ENCODE measurements at regions of chr6 and their contacts with region 1.

Region 1: DNA sequence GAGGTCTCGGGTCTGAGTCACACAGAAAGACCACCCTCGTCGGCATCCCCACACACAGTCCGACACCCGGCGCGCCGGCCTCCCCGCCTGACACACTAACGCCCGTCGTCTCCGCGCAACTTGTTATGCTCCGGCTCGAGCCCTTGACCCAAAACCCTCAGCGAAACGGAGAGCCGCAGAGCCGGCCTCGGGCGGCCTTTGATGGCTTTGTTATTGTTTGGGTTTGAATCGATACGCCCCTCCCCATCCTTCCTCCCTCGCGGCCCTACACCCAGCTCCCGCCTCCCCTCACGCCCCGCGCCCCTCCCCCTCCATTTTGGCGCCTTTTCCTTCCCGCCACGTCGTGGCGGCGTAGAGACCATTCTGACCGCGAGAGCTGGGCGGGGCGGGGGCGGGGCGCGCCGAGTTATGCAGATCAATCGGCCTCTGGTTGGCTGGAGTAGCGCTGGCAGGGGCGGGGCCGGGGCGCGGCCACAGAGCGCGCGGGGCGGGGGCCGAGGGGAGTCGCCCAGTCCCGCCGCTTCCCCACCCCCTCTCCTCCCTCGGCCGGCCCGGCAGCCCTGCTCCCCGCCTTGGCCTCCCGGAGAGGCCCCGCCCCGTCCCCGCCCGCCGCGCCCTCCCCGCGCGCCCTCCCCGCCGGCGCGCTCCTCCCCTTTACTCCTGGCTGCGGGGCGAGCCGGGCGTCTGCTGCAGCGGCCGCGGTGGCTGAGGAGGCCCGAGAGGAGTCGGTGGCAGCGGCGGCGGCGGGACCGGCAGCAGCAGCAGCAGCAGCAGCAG is at the start of gene PIM1:
- DNase-seq: peak; percentile 100
- H3K4me3 Mint-ChIP-seq: peak within 1 kb of the TSS; percentile 93
- H3K27ac Mint-ChIP-seq: peak within 1 kb of the TSS; percentile 96
- H3K4me1 Mint-ChIP-seq: peaks cover 34% of the 10 kb centered on the region
- H3K27me3 Mint-ChIP-seq: no peaks in the 10 kb centered on the region
- total RNA-seq, gene PIM1: 226 to 227 TPM

Region 2: GRCh38 chr6:36874443-36875249 is 295.0 kb before region 1 on chr6 and contains the start of gene PPIL1:
- CTCF ChIA-PET with region 1: no interaction called
- intact Hi-C with region 1: loop called (anchors 5 kb)
- DNase-seq: peak; percentile 88
- H3K4me3 Mint-ChIP-seq: peak within 1 kb of the TSS; percentile 94
- H3K27ac Mint-ChIP-seq: peak within 1 kb of the TSS; percentile 98
- H3K4me1 Mint-ChIP-seq: peaks cover 39% of the 10 kb centered on the region
- H3K27me3 Mint-ChIP-seq: peaks cover 8% of the 10 kb centered on the region
- total RNA-seq, gene PPIL1: 42.8 to 44.0 TPM

Region 3: GRCh38 chr6:37038292-37039198 is 131.1 kb before region 1 on chr6:
- CTCF ChIA-PET with region 1: interaction called, 8 read pairs
- intact Hi-C with region 1: loop called (anchors 1 kb)
- DNase-seq: no peak
- H3K4me3 Mint-ChIP-seq: no peak overlapping the region
- H3K27ac Mint-ChIP-seq: no peak overlapping the region
- H3K4me1 Mint-ChIP-seq: peaks cover 36% of the 10 kb centered on the region
- H3K27me3 Mint-ChIP-seq: no peaks in the 10 kb centered on the region

Region 4: DNA sequence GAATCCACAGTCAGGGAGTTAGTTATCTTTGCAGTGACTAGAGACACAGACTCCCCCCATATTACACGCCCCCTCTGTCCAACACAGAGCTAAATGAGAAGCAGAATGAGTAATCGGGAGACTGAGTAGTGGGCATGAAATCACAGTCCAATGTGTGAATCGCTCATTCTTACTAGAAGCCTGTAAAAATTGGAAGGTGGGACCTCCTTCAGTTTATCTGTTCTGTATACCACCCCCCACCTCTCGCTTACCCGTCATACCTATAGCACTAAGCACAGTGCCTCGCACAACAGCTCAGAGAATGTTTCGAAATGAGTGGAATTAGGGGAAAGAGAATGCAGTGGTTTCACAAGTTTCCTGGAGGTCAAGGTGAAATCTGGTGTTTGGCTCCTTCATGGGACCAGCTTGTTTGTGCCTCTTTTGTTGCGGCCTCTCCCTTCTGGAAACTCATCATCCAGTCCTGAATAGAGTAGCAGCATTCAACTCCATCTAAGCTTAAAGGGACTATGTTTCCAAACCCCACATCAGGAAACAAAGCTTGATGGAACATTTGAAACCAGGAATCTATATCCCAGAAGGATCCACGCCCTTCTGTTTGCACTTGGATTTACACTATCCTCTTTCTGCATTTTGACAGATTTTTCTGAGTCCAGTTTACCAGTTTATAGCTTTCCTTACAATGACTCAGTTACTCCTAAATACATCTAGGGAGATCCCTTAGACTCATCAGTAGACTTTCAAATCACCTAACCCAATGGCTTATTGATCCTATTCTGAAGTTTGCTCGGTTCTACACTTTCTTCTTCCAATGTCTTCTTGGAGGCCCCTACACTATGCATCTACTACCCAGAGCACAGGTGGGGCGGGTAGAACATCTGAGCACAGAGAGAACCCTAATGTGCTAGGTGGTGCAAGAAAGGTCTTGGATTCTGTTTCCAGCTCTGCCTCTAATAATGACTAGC is 58.9 kb before region 1 on chr6:
- CTCF ChIA-PET with region 1: no interaction called
- intact Hi-C with region 1: loop called (anchors 2 kb)
- DNase-seq: peak; percentile 71
- H3K4me3 Mint-ChIP-seq: no peak overlapping the region
- H3K27ac Mint-ChIP-seq: peak overlapping the region; percentile 80
- H3K4me1 Mint-ChIP-seq: peaks cover 17% of the 10 kb centered on the region
- H3K27me3 Mint-ChIP-seq: no peaks in the 10 kb centered on the region

Region 5: GRCh38 chr6:37182736-37183590 is 13.3 kb after region 1 on chr6:
- CTCF ChIA-PET with region 1: interaction called, 8 read pairs
- intact Hi-C with region 1: loop called (anchors 1 kb)
- DNase-seq: peak; percentile 83
- H3K4me3 Mint-ChIP-seq: peak overlapping the region; percentile 34
- H3K27ac Mint-ChIP-seq: peak overlapping the region; percentile 95
- H3K4me1 Mint-ChIP-seq: peaks cover 59% of the 10 kb centered on the region
- H3K27me3 Mint-ChIP-seq: no peaks in the 10 kb centered on the region

Region 6: GRCh38 chr6:37239950-37240713 is 70.4 kb after region 1 on chr6:
- CTCF ChIA-PET with region 1: interaction called, 3 read pairs
- intact Hi-C with region 1: loop called (anchors 1 kb)
- DNase-seq: peak; percentile 93
- H3K4me3 Mint-ChIP-seq: no peak overlapping the region
- H3K27ac Mint-ChIP-seq: peak overlapping the region; percentile 83
- H3K4me1 Mint-ChIP-seq: peaks cover 39% of the 10 kb centered on the region
- H3K27me3 Mint-ChIP-seq: no peaks in the 10 kb centered on the region

Region 7: DNA sequence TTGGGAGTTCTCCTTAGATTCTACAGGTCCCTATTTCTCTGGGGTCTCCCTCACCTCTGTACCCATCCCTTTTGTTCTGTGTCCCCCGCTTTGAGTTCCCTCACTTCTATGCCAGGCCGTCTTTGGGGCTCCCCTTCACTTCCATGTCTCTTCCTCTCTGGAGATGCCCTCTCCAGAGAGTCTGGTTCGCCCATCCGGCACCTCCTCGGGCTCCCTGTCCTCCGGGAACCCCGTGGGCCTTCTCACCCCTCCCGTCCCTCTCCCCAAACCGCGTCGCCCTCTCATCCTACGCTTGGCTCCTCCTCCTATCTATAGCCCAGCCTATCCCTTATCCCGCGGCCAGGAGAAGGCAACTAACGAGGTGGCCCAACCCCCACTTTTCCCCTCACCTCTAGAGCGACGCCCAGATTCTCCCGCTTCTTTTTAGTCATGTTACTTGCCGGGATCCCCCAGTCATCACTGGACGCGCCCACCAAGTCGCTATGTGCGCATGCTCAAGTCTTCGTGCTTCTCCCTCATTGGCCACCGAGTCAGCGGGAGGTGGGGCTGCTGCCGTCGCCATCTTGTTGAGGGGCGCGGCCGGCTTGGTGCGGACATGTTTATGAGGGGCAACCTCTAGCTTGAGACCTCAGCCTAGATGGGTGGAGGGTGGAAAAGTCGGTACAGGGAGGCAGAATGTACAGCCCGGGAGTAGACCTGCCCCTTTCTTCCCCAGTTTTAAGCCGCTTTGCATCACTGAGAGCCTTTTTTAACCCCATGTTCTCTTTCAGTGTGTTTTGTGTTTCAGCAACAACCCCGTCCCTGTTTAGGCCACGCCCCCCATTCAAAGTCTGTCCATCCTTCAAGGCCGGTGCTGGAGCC is 330.0 kb after region 1 on chr6 and contains the start of gene CCDC167:
- CTCF ChIA-PET with region 1: no interaction called
- intact Hi-C with region 1: loop called (anchors 5 kb)
- DNase-seq: peak; percentile 99
- H3K4me3 Mint-ChIP-seq: peak within 1 kb of the TSS; percentile 98
- H3K27ac Mint-ChIP-seq: peak within 1 kb of the TSS; percentile 97
- H3K4me1 Mint-ChIP-seq: peaks cover 90% of the 10 kb centered on the region
- H3K27me3 Mint-ChIP-seq: no peaks in the 10 kb centered on the region
- total RNA-seq, gene CCDC167: 53.4 to 57.1 TPM

Measured in activated naive CD4-positive, alpha-beta T cell treated with anti-CD3 and anti-CD28 coated beads for 36 hours (primary cell).